ENCODE measurements at regions of chr7 and their contacts with region 1.

Region 1: DNA sequence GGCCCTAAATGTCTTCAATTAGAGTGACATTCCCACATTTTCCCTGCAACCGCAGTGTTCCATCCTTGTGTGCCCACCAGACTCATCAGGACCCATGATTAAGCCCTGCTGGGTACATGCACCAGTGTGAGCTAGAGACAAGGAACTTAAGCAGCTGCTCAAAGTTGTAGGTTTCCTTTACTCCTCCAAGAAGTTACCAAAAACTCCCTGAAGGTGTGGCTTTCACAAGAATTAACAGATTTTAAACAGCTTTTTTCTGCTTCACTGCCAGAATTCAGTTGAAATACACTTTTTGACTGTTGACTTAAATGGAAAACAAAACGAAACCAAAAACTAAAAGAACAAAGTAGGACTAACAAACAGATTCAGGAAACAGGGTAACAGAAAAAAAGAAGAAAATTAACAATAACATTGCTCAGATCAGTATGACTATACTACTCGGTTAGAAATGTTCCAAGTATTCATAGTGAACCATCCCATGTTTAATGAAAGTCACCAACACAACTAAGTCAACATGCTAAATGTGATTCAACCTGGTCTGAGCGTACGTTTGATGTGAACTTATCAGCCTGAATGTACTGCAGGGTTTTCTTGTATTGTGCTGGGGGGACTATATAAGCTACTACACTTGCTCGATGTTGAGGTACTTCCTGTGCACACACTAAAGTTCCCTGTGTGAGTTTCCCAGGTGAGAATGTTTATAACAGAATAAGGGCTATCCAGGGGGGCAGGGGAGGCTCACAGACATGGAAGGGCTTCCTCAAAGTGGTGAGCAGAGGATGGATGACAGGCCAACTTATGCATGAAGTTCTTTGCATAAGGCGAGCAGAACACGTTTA is 22.2 kb downstream of the SLC37A3 start:
- DNase-seq: peak; percentile 47
- H3K4me3 Mint-ChIP-seq: peak overlapping the region; percentile 61
- H3K27ac Mint-ChIP-seq: peak overlapping the region; percentile 98
- H3K4me1 Mint-ChIP-seq: peaks cover 48% of the 10 kb centered on the region
- H3K27me3 Mint-ChIP-seq: no peaks in the 10 kb centered on the region

Region 2: GRCh38 chr7:140358412-140359051 is 17.6 kb before region 1 on chr7:
- intact Hi-C with region 1: loop called (anchors 1 kb)
- DNase-seq: peak; percentile 9
- H3K4me3 Mint-ChIP-seq: peak overlapping the region; percentile 63
- H3K27ac Mint-ChIP-seq: peak overlapping the region; percentile 98
- H3K4me1 Mint-ChIP-seq: peaks cover 30% of the 10 kb centered on the region
- H3K27me3 Mint-ChIP-seq: no peaks in the 10 kb centered on the region

Region 3: GRCh38 chr7:140390466-140391190 is 14.5 kb after region 1 on chr7:
- intact Hi-C with region 1: loop called (anchors 1 kb)
- DNase-seq: no peak
- H3K4me3 Mint-ChIP-seq: no peak overlapping the region
- H3K27ac Mint-ChIP-seq: no peak overlapping the region
- H3K4me1 Mint-ChIP-seq: peaks cover 2% of the 10 kb centered on the region
- H3K27me3 Mint-ChIP-seq: no peaks in the 10 kb centered on the region

Region 4: DNA sequence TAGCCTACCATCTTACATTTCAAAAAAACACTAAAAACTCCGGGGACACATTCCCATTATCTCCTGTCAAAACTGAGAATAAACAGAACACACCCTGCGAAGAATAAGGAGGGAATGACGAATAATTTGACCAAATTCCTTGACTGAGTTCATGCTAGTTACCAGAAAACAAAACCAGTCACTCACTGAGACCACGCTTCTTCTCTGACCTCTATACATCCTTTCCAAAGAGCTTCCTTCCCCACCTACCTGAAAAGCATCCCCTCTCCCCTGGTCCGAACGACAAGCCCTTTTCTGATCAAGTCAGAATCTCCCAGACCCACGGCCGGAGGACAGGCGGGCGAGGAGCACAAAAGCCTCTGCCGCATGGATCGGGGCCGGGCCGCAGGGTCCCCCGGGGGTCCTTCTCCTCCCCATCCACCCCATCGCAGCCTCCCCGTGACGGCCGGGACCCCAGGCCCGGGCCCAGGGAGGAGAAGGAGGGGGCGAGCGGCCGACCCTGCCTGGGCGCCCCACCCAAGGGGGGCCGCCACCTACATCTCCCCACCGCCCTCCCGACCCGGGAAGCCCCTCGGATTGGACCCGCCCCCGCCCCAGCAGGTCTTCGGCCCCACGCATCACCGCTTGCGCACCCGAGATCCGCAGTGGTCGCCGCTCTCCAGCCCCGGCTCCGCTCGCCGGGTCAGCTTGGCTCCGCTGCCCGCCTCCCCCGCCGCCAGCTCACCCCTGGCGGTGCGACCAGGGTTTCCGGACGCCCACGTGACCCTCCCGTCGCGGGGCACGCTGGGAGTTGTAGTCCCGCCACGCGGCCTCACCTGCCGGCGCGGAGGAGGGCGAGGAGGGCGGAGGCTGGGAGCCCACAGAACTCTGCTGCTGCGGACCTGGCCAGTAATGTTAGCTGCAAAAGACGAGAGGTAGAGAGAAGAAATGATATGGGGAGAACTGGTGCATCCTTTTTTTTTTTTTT is 22.0 kb after region 1 on chr7 and contains the start of gene SLC37A3:
- intact Hi-C with region 1: loop called (anchors 1 kb)
- DNase-seq: peak; percentile 84
- H3K4me3 Mint-ChIP-seq: peak within 1 kb of the TSS; percentile 99
- H3K27ac Mint-ChIP-seq: peak within 1 kb of the TSS; percentile 96
- H3K4me1 Mint-ChIP-seq: peaks cover 48% of the 10 kb centered on the region
- H3K27me3 Mint-ChIP-seq: no peaks in the 10 kb centered on the region
- total RNA-seq, gene SLC37A3: 169 and 171 TPM in 2 replicates

Region 5: DNA sequence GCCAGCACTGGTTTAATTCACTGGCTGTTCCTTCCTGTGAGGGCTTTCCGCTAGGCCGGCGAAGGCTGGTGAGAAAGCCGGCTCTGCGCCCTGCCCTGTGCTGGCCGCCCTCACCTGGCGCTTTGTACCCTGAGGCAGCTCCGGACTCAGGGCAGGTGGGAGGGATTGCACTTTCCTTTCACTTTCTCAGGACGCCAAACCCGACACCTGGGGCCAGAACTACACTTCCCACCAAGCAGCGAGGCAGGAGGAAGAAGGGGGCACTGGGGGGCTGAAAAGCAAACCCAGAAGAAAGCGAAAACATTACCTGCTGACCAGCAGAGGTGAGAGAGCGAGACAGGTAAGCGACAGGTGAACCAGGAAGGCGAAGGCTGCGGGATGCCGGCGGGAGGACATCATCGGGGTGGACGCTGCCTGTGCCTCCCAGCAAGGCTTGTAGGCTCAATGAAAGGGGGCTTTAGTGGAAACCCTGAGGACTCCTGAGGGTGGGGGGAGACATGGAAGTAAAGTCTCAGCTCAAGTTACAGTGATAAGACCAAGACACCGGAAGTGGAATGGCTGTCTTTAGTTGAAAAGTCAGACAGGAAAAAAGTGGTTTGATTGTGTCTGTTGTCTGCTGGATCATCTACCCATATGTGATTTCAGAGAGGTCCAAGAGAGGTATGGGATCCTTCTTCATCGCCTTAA is 27.9 kb after region 1 on chr7 and contains the start of gene RAB19:
- intact Hi-C with region 1: loop called (anchors 1 kb)
- DNase-seq: peak; percentile 26
- H3K4me3 Mint-ChIP-seq: peak within 1 kb of the TSS; percentile 95
- H3K27ac Mint-ChIP-seq: peak within 1 kb of the TSS; percentile 90
- H3K4me1 Mint-ChIP-seq: peaks cover 49% of the 10 kb centered on the region
- H3K27me3 Mint-ChIP-seq: no peaks in the 10 kb centered on the region
- total RNA-seq, gene RAB19: 23.9 and 27.0 TPM in 2 replicates

Region 6: GRCh38 chr7:140439359-140439758 is 63.2 kb after region 1 on chr7:
- intact Hi-C with region 1: loop called (anchors 5 kb)
- DNase-seq: no peak
- H3K4me3 Mint-ChIP-seq: no peak overlapping the region
- H3K27ac Mint-ChIP-seq: peak overlapping the region; percentile 58
- H3K4me1 Mint-ChIP-seq: peaks cover 13% of the 10 kb centered on the region
- H3K27me3 Mint-ChIP-seq: peaks cover 4% of the 10 kb centered on the region

Region 7: DNA sequence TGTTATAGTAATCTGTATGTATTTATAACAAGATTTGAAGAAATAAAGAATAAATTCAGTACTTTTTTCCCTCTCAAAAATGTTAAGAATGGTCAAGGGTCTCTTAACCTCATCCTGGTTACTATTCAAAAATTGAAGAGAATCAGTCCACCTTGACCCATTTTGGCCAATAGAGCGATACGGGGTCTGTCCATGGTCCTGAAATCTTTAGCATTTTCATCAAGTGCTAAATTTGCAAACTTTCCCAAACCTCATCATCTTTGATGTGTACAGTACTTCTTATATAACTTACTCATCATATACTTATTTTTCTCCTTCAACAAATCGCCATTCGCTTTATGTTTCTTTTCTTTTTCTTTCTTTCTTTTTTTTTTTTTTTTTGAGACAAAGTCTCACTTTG is 721.3 kb after region 1 on chr7:
- intact Hi-C with region 1: no loop called
- DNase-seq: no peak
- H3K4me3 Mint-ChIP-seq: no peak overlapping the region
- H3K27ac Mint-ChIP-seq: no peak overlapping the region
- H3K4me1 Mint-ChIP-seq: no peaks in the 10 kb centered on the region
- H3K27me3 Mint-ChIP-seq: no peaks in the 10 kb centered on the region

Region 8: GRCh38 chr7:141558544-141559183 is 1182.6 kb after region 1 on chr7:
- intact Hi-C with region 1: loop called (anchors 5 kb)
- DNase-seq: peak; percentile 31
- H3K4me3 Mint-ChIP-seq: peak overlapping the region; percentile 60
- H3K27ac Mint-ChIP-seq: peak overlapping the region; percentile 94
- H3K4me1 Mint-ChIP-seq: peaks cover 83% of the 10 kb centered on the region
- H3K27me3 Mint-ChIP-seq: no peaks in the 10 kb centered on the region

Measured in activated T-helper 1 cell treated with anti-CD3 and anti-CD28 coated beads, Interleukin-12 subunit alpha, Interleukin-12 subunit beta, Interleukin-2, Interleukin-4 antibody, amounts not matched to agents 30 ng/mL and 10 ng/mL and 1 ng/mL, durations not matched to agents 14 hours and 24 hours and 36 hours (primary cell).